ENCODE measurements at regions of chr1 and their contacts with region 1.

Region 1: DNA sequence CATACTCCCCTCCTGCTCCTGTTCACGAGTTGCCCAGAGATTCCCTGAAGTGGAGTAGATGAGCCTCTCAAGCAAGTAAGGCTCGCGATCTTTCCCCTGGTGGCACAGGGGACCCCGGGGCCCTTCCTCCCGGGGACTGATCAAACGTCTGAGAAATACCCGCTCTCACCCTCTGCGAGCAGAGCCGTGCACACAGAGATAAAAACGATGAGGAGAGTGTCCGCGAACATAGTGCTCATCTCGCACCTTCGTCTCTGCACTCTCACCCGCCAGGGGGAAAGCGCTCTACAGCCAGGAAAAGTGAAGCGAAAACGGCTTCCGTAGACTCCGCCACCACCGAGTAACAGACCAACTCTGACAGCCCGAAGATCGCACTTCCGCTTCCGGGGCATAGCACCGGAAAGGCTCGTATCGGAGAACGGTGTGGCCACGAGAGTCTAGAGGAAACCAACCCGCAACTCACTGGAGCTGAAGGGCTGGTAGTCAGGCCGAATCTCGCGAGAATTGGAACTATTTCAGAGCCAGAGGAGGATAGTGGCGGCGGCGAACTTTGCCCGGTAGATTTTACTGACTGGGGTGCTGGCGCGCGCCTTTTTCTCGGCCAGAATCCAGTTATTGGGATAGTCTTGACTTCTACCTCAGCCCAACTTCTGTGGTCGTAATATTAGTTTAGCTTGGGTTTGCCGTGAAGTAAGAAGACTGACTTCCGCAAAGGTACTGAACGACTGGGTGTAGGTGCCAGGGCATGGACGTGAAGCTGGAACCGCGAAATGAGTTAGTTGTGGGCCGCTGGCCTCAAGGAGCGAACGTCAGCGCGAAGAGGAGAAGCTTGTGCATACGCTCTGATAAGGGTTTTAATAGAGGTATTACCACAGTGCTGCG is at the start of gene TMCO1:
- DNase-seq: peak; percentile 96
- H3K4me3 ChIP-seq: peak within 1 kb of the TSS; percentile 44 to 60
- H3K27ac ChIP-seq: peak within 1 kb of the TSS; percentile 74 to 78
- H3K4me1 ChIP-seq: peaks cover 3% of the 10 kb centered on the region
- H3K27me3 ChIP-seq: no peaks in the 10 kb centered on the region
- CTCF ChIP-seq: peak in 3 of 4 experiments; percentile 9 to 32 (median 20)
- POLR2A ChIP-seq: peak; percentile 45
- total RNA-seq, gene TMCO1: 90.8 to 120 TPM

Region 2: DNA sequence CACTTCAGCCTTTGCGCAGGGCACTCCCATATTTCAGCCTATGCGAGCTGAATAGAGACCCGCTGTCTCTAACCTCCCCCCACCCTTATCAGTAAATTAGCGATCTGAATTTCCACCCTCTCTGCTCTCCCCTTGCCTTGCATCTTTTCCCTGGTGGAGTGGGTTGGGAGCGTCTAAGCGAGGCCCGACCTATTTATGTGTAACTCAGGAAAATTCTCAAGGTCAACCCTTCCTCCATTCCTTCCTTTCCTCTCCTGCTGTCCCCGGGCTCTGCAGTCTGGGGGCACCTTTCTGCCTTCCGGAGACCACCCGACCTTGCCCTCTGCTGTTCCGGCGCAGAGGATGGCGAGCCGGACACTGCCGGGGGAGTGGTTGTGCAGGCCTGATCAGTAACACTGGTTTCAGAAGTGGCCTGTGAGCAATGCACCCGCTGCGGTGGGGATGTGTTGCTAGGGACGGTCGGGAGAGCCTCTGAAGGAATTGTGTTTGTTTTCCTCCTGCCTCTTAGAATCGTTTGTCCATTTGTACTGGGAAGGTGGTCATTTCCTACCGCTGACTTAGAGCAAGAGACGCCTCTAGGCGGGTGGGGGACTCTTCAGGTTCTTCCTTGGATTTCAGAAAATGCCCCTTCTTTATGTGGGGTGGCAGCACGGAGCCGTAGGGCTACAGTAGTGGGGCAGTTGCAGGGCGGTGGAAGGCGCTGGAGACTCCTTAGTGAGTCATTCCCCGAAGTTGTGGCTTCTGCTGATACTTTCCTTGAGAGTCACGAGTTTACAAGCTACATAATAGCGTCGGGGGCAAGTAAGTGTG is 137.2 kb before region 1 on chr1:
- intact Hi-C with region 1: loop called (anchors 2 kb)
- DNase-seq: peak; percentile 53
- H3K4me3 ChIP-seq: peak overlapping the region; percentile 63 to 77
- H3K27ac ChIP-seq: peak overlapping the region; percentile 87 to 92
- H3K4me1 ChIP-seq: peaks cover 5% of the 10 kb centered on the region
- H3K27me3 ChIP-seq: no peaks in the 10 kb centered on the region
- CTCF ChIP-seq: peak in 1 of 4 experiments; percentile 1
- POLR2A ChIP-seq: no peak

Region 3: GRCh38 chr1:165697881-165698760 is 70.6 kb before region 1 on chr1 and contains the start of gene ALDH9A1:
- intact Hi-C with region 1: loop called (anchors 5 kb)
- DNase-seq: peak; percentile 80
- H3K4me3 ChIP-seq: peak within 1 kb of the TSS; percentile 71 to 92
- H3K27ac ChIP-seq: peak within 1 kb of the TSS; percentile 91 to 98
- H3K4me1 ChIP-seq: peaks cover 12% of the 10 kb centered on the region
- H3K27me3 ChIP-seq: no peaks in the 10 kb centered on the region
- CTCF ChIP-seq: peak in 3 of 4 experiments; percentile 31 to 43 (median 40)
- POLR2A ChIP-seq: peak; percentile 93
- total RNA-seq, gene ALDH9A1: 172 to 206 TPM

Region 4: GRCh38 chr1:165827268-165828102 is 58.7 kb after region 1 on chr1 and contains the start of gene UCK2:
- intact Hi-C with region 1: loop called (anchors 2 kb)
- DNase-seq: peak; percentile 72
- H3K4me3 ChIP-seq: peak within 1 kb of the TSS; percentile 71 to 73
- H3K27ac ChIP-seq: peak within 1 kb of the TSS; percentile 83 to 87
- H3K4me1 ChIP-seq: no peaks in the 10 kb centered on the region
- H3K27me3 ChIP-seq: no peaks in the 10 kb centered on the region
- CTCF ChIP-seq: peak in 1 of 4 experiments; percentile 32
- POLR2A ChIP-seq: peak; percentile 62
- total RNA-seq, gene UCK2: 23.8 to 25.9 TPM

Measured in prostate gland (tissue), 2 donors.